Naive thymus-derived CD4-positive, alpha-beta T cell (primary cell): ENCODE measurements at regions of chr11 and their contacts with region 1.

Region 1: DNA sequence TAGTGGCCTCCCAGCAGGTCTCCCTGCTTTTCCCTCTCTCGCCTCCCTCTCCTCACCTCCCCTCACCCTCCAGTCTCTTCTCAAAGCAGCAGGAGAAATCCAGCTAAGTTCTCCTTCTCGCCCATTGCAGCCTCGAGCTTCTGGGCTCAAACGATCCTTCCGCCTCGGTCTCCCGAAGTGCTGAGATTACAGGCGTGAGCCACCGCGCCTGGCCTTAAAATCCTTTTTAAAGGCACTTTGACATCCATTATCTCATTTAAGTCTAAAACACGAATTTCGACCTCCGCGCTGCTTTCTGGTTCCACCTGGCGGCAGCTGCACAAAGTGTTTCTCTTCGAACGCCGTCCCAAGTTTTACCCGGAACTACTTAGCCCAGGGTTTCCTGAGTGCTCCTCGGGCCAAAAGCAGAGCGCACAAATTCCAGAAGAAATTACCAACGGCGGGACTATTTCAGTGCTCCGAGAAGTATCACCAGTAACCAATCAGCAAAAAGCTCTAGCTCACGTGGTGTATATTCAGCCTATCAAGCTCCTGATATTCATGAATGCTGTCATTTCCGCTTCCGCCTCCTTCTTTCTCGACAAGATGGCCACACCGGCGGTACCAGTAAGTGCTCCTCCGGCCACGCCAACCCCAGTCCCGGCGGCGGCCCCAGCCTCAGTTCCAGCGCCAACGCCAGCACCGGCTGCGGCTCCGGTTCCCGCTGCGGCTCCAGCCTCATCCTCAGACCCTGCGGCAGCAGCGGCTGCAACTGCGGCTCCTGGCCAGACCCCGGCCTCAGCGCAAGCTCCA is at the start of gene EIF3F:
- DNase-seq: peak; percentile 64 to 98 (median 95)
- ATAC-seq: peak; percentile 98
- H3K4me3 ChIP-seq: peak within 1 kb of the TSS; percentile 70
- H3K4me3 Mint-ChIP-seq: peak within 1 kb of the TSS; percentile 85 to 99 (median 92)
- H3K27ac ChIP-seq: peak within 1 kb of the TSS; percentile 78
- H3K27ac Mint-ChIP-seq: peak within 1 kb of the TSS; percentile 88 to 100 (median 97)
- H3K4me1 ChIP-seq: peaks cover 20 to 31% of the 10 kb centered on the region in 2 donors
- H3K4me1 Mint-ChIP-seq: peaks cover 29 to 64% (median 49%) of the 10 kb centered on the region in 7 donors
- H3K27me3 ChIP-seq: no peaks in the 10 kb centered on the region
- H3K27me3 Mint-ChIP-seq: no peaks in the 10 kb centered on the region
- total RNA-seq, gene EIF3F: 222 to 405 (median 353) TPM

Region 2: GRCh38 chr11:6402561-6402981 is 1584.4 kb before region 1 on chr11:
- CTCF ChIA-PET with region 1: no interaction called
- POLR2A ChIA-PET with region 1: no interaction called
- intact Hi-C with region 1: loop called in 1 of 2 experiments (anchors 5 kb)
- DNase-seq: peak in 8 of 9 donors; percentile 69 to 99 (median 97)
- ATAC-seq: peak; percentile 92
- H3K4me3 ChIP-seq: peak overlapping the region; percentile 52
- H3K4me3 Mint-ChIP-seq: peak overlapping the region; percentile 74 to 94 (median 90)
- H3K27ac ChIP-seq: peak overlapping the region; percentile 80
- H3K27ac Mint-ChIP-seq: peak overlapping the region; percentile 94 to 100 (median 97)
- H3K4me1 ChIP-seq: peaks cover 53 to 83% of the 10 kb centered on the region in 2 donors
- H3K4me1 Mint-ChIP-seq: peaks cover 63 to 100% (median 87%) of the 10 kb centered on the region in 7 donors
- H3K27me3 ChIP-seq: no peaks in the 10 kb centered on the region
- H3K27me3 Mint-ChIP-seq: peaks cover 0 to 5% (median 0%) of the 10 kb centered on the region in 5 donors

Region 3: DNA sequence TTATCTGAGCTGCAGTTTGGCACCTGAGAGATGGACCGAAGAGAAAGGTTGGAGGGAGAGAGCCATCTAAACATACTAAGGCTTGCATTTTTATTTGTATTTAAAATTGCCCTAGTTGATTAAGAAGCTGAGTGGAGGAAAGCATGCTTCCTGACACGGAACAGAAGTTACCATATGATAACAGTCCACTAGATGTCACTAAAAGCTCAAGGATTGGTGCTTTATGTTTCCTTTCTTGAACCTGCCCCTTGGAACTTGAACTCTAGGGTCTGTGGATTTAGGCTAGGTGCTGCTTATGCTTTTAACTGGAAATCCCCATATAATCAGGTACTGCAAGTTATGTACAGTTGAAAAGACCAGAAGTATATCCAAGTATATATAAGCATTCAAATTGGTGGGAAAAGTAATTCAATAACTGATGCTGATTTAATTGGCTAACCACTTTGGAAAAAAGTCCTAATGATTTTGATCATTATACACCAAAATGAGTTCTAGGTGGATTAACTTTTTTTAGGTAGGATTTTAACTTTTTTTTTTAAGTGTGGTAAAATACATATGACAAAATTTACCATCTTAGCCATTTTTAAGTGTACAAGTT is 888.6 kb before region 1 on chr11:
- CTCF ChIA-PET with region 1: no interaction called
- POLR2A ChIA-PET with region 1: no interaction called
- intact Hi-C with region 1: loop called (anchors 1 kb)
- DNase-seq: peak in 7 of 9 donors; percentile 10 to 52 (median 39)
- ATAC-seq: peak; percentile 69
- H3K4me3 ChIP-seq: no peak overlapping the region
- H3K4me3 Mint-ChIP-seq: no peak overlapping the region
- H3K27ac ChIP-seq: no peak overlapping the region
- H3K27ac Mint-ChIP-seq: no peak overlapping the region
- H3K4me1 ChIP-seq: no peaks in the 10 kb centered on the region
- H3K4me1 Mint-ChIP-seq: no peaks in the 10 kb centered on the region
- H3K27me3 ChIP-seq: no peaks in the 10 kb centered on the region
- H3K27me3 Mint-ChIP-seq: peaks cover 18 to 40% (median 30%) of the 10 kb centered on the region in 5 donors

Region 4: GRCh38 chr11:7688238-7688826 is 298.6 kb before region 1 on chr11:
- CTCF ChIA-PET with region 1: no interaction called
- POLR2A ChIA-PET with region 1: no interaction called
- intact Hi-C with region 1: loop called (anchors 10 kb)
- DNase-seq: peak in 5 of 9 donors; percentile 8 to 31 (median 22)
- ATAC-seq: peak; percentile 55
- H3K4me3 ChIP-seq: no peak overlapping the region
- H3K4me3 Mint-ChIP-seq: no peak overlapping the region
- H3K27ac ChIP-seq: no peak overlapping the region
- H3K27ac Mint-ChIP-seq: no peak overlapping the region
- H3K4me1 ChIP-seq: no peaks in the 10 kb centered on the region
- H3K4me1 Mint-ChIP-seq: peaks cover 0 to 2% (median 0%) of the 10 kb centered on the region in 7 donors
- H3K27me3 ChIP-seq: no peaks in the 10 kb centered on the region
- H3K27me3 Mint-ChIP-seq: peaks cover 25 to 42% (median 32%) of the 10 kb centered on the region in 5 donors

Region 5: DNA sequence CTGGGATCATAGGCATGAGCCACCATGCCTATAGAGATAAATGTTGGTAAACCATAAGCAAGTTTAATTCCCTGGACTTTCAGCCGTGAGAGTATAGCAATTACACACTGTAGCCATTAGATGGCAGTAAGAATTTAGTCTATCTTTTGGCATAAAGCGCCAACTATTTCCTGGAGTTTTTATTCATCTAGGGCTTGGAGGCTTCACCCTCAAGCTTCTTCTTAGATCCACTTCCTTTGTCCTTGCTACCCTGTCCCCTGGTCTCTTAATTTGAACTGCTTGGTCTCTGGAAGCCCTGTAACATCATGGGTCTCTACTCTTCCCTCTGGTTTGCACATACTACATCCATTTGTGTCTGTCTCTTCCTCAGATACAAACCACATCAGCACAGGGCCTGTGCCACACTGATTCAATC is 94.1 kb before region 1 on chr11:
- CTCF ChIA-PET with region 1: interaction called, 25 read pairs
- POLR2A ChIA-PET with region 1: interaction called, 9 read pairs
- intact Hi-C with region 1: loop called (anchors 1 kb)
- DNase-seq: peak in 6 of 9 donors; percentile 26 to 46 (median 40)
- ATAC-seq: peak; percentile 67
- H3K4me3 ChIP-seq: no peak overlapping the region
- H3K4me3 Mint-ChIP-seq: no peak overlapping the region
- H3K27ac ChIP-seq: no peak overlapping the region
- H3K27ac Mint-ChIP-seq: no peak overlapping the region
- H3K4me1 ChIP-seq: no peaks in the 10 kb centered on the region
- H3K4me1 Mint-ChIP-seq: peaks cover 0 to 7% (median 3%) of the 10 kb centered on the region in 7 donors
- H3K27me3 ChIP-seq: no peaks in the 10 kb centered on the region
- H3K27me3 Mint-ChIP-seq: peaks cover 4 to 22% (median 9%) of the 10 kb centered on the region in 5 donors

Region 6: GRCh38 chr11:7945291-7945690 is 41.7 kb before region 1 on chr11:
- CTCF ChIA-PET with region 1: no interaction called
- POLR2A ChIA-PET with region 1: no interaction called
- intact Hi-C with region 1: no loop called
- DNase-seq: no peak
- ATAC-seq: no peak
- H3K4me3 ChIP-seq: no peak overlapping the region
- H3K4me3 Mint-ChIP-seq: no peak overlapping the region
- H3K27ac ChIP-seq: no peak overlapping the region
- H3K27ac Mint-ChIP-seq: no peak overlapping the region
- H3K4me1 ChIP-seq: no peaks in the 10 kb centered on the region
- H3K4me1 Mint-ChIP-seq: peaks cover 0 to 1% (median 0%) of the 10 kb centered on the region in 7 donors
- H3K27me3 ChIP-seq: no peaks in the 10 kb centered on the region
- H3K27me3 Mint-ChIP-seq: peaks cover 8 to 37% (median 28%) of the 10 kb centered on the region in 5 donors

Region 7: DNA sequence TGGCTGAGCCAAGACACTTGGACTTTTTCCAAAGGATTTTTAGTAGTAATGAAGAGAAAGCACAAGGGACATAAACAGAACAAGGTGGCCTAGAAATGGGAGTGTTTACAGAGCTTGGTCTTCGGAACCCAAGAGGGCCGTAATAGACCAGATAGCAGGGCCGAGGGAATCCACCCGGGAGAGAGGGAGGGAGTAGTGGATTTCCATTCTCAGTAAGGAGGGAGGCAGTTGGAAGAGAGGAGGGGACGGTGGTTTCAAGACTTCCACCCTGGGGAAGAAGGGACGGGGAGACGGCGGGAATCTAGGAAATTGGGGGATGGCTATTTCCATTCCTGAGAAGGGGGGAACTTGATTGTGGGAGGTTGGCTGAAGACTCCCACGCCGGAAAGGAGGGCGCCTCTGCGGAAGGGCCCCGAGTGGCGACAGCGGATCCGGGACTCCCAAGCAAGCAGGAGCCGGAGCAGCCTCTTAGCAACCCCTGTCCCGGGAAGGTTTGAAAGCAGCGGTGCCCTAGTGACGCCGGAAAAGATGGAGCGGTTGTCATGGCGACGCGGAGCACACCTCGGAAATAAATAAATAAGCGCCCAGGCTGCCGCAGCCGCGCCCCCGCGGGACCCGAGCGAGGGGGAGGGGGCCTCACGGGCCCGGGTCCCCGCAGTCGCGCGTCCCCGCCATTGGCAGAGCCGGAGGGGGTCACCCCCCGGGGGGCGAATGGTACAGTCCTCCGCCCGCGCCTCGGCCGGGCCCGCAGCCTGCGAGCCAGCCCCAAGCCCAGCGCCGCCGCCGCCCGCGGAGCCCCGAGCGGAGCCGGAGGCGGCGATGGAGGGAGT is 31.7 kb after region 1 on chr11:
- CTCF ChIA-PET with region 1: interaction called, 3 read pairs
- POLR2A ChIA-PET with region 1: interaction called, 4 read pairs
- intact Hi-C with region 1: loop called (anchors 1 to 2 kb)
- DNase-seq: peak; percentile 60 to 85 (median 74)
- ATAC-seq: peak; percentile 83
- H3K4me3 ChIP-seq: peak overlapping the region; percentile 62
- H3K4me3 Mint-ChIP-seq: peak overlapping the region; percentile 72 to 90 (median 82)
- H3K27ac ChIP-seq: peak overlapping the region; percentile 47
- H3K27ac Mint-ChIP-seq: peak overlapping the region in 7 of 9 donors; percentile 42 to 89 (median 78)
- H3K4me1 ChIP-seq: peaks cover 4% of the 10 kb centered on the region in 2 donors
- H3K4me1 Mint-ChIP-seq: peaks cover 7 to 20% (median 12%) of the 10 kb centered on the region in 7 donors
- H3K27me3 ChIP-seq: peaks cover 0 to 4% of the 10 kb centered on the region in 2 donors
- H3K27me3 Mint-ChIP-seq: peaks cover 40 to 57% (median 55%) of the 10 kb centered on the region in 5 donors

Region 8: GRCh38 chr11:8092587-8093424 is 105.8 kb after region 1 on chr11:
- CTCF ChIA-PET with region 1: no interaction called
- POLR2A ChIA-PET with region 1: no interaction called
- intact Hi-C with region 1: no loop called
- DNase-seq: peak in 1 of 9 donors; percentile 30
- ATAC-seq: peak; percentile 48
- H3K4me3 ChIP-seq: no peak overlapping the region
- H3K4me3 Mint-ChIP-seq: no peak overlapping the region
- H3K27ac ChIP-seq: no peak overlapping the region
- H3K27ac Mint-ChIP-seq: no peak overlapping the region
- H3K4me1 ChIP-seq: no peaks in the 10 kb centered on the region
- H3K4me1 Mint-ChIP-seq: peaks cover 0 to 7% (median 4%) of the 10 kb centered on the region in 7 donors
- H3K27me3 ChIP-seq: no peaks in the 10 kb centered on the region
- H3K27me3 Mint-ChIP-seq: peaks cover 0 to under 1% (median 0%) of the 10 kb centered on the region in 5 donors

Region 9: GRCh38 chr11:8682303-8683114 is 695.5 kb after region 1 on chr11 and contains the starts of genes RPL27A and TRIM66:
- CTCF ChIA-PET with region 1: no interaction called
- POLR2A ChIA-PET with region 1: interaction called, 6 read pairs
- intact Hi-C with region 1: loop called (anchors 1 to 2 kb)
- DNase-seq: peak; percentile 97 to 100 (median 99)
- ATAC-seq: peak; percentile 98
- H3K4me3 ChIP-seq: peak within 1 kb of the TSS; percentile 73
- H3K4me3 Mint-ChIP-seq: peak within 1 kb of the TSS; percentile 89 to 97 (median 96)
- H3K27ac ChIP-seq: peak within 1 kb of the TSS; percentile 99
- H3K27ac Mint-ChIP-seq: peak within 1 kb of the TSS; percentile 97 to 99 (median 98)
- H3K4me1 ChIP-seq: peaks cover 17% of the 10 kb centered on the region in 2 donors
- H3K4me1 Mint-ChIP-seq: peaks cover 30 to 57% (median 43%) of the 10 kb centered on the region in 7 donors
- H3K27me3 ChIP-seq: no peaks in the 10 kb centered on the region
- H3K27me3 Mint-ChIP-seq: no peaks in the 10 kb centered on the region
- total RNA-seq, gene RPL27A: 758 to 2,116 (median 1,670) TPM
- total RNA-seq, gene TRIM66: 16.0 to 37.6 (median 24.2) TPM